GM18951 (cell line): ENCODE measurements at regions of chr1 and their contacts with region 1.

Region 1: DNA sequence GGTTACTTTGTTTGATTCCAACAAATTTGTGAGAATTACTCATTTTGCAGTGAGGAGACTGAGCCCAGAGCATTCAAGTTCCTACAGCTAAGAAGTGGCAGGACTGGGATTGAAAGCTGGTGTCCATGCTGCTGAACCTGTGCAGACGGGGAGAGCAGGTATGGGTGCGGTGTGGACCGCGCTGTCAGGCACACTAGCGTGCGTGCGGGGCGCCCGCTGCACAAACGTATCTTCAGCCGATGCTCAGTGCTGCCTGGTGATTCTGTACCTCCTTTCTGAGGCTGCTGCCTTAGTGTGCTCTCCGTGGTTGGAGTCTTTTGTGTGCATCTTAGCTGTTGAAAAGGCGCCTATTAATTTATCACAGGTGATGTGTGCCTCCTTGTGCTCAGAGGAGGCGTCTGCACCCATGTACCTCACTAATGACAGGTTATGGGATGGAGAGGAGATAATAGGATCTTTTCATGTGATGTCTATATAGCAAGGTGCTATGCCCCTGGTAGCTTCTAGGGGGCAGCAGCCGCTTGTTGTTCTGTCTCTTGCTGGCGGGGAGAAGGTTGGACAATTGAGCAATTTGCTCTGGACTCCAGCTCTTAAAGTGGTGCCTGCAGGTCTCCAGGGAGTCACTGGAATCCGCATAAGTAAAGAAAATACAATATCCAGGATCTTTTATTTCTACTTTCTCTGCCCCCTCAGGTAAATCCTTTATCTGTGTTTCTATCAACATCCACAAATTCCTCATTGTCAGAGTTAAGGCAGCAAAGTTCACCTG is 32.5 kb downstream of the PEX14 start:
- POLR2A ChIP-seq: no peak

Region 2: DNA sequence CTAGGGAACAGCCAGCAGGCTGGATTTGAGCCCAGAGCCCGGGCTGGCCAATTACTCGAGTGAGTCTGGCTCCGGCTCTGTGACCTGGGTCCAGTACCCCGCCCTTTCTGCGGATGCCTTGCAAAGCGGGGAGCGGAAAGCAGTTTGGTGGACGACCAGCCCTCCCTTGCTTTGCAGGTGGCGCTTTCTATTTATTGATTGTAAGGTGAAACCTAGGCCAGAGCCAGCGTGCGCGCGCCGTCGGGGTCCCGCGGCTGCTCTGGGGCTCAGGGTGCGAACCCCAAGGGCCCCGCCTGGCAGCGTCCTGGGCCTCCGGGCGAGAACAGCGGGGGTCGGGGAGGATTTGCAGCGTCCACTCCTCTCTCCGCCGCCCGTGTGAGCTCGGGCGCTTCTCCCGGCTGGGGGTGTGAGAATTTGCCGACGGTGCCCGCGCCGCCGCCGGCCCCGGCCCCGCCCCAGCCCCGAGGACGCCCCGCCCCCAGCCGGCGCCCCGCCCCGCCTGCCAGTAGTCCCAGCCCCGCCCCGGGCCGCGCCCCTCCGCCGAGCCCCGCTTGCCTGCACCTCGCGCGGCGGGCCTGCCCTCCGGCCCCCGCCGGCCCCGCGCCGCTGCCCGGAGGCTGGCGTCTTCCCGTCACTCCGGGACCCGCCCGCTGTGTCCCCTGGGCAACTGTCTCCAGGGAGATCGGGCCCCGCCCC is 818.1 kb before region 1 on chr1:
- in situ Hi-C with region 1: no loop called
- POLR2A ChIP-seq: peak; percentile 35

Region 3: DNA sequence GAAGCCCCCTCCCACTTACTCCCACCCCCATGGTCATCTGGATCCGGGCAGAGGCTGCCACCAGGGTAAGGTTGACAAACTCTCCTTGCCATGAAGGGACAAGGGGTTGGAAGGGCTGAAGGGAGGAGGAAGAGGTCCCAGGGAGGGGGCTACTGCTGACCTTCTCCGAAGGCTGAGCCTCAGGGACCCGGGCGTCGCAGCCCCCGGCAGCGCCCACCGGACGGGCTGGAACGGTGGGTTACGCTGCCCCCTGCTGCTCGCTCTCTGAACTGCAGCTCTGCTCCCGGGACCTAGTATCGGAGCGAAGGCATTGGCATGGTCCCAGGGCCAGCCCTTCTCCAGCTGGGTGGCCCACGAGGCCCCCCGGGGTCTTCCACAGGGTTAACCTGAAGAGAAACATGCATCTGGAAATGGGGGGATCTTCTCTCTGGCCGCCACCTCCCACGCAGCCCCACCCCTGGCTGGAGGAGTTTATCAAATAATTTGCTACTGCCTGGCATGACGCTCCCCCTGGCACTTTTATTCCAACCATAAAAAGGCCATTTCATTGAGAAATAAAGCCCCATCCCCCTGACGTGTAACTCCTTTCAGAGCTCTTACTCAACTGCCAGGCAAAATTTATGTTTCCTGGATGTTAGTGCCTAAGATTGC is 434.7 kb after region 1 on chr1:
- in situ Hi-C with region 1: loop called (anchors 25 kb)
- POLR2A ChIP-seq: no peak